Caco-2 (cell line): ENCODE measurements at regions of chr3 and their contacts with region 1.

Region 1: DNA sequence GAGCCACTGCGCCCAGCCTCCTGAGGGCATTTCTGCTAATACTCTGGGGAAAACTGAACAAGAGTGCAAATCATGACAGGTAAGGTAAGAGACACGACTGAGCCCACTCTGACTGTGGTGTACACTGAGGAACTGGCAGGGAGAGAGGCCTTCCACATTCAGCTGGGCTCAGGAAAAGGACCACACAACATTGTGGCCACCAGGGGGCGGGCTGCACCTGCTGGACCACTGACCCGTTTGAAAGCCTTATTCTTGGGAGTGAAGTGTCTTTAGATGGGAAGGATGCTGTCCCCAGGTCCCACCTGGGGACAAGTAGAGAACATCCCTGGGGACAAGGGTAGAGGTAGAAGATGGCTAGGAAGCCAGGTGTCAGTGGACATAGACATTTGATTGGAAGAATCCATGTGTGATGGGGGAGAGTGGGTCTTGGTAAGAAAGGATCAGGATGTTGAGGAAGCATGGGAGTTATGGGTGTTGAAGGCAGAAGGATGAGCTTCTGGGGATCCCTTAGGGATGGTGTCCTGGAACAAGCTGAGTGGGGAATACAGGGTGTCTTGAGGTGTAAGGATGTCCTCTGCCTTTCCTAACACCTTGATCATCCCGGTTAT is 6.2 kb upstream of the CTDSPL start:
- DNase-seq: peak; percentile 76 to 89
- H3K4me3 ChIP-seq: no peak overlapping the region
- H3K4me3 Mint-ChIP-seq: no peak overlapping the region
- H3K27ac Mint-ChIP-seq: no peak overlapping the region
- H3K4me1 ChIP-seq: peaks cover 7% of the 10 kb centered on the region
- H3K4me1 Mint-ChIP-seq: no peaks in the 10 kb centered on the region
- H3K27me3 ChIP-seq: no peaks in the 10 kb centered on the region
- H3K27me3 Mint-ChIP-seq: no peaks in the 10 kb centered on the region
- CTCF ChIP-seq: peak; percentile 87 to 91

Region 2: DNA sequence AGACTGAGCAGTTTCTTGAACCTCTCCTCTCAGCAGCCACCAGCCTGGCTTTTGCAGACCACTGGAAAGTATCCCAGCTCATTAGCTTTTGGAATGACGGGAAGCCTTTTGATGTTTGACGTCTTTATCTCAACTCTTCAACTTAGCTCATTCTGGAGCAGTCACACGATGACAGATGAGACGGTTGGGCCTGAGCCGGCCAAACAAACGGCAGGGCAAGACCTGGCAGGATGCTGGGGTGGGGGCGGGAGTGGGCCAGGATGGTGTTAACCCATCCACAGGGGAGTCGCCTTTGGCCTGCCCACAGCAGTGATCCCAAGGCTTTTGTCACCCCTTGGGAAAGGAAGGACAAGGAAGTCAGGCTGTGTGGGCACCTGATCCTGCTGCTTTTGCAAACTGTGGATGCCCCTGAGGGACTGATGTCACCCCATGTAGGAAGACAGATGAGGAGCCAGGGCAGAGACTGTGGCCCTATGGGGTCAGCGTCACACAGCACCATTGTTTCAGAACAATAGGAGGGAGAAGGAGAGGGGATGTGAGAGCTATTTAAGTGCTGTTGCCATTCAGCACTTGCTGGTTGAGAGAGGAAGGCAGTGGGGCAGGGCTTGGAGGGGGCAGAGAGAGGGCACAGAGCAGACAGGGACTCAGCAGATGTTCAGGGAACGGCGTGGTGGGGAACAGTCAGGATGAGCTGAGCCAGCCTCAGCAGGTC is 115.7 kb before region 1 on chr3:
- CTCF ChIA-PET with region 1: interaction called, 10 read pairs
- POLR2A ChIA-PET with region 1: no interaction called
- intact Hi-C with region 1: no loop called
- DNase-seq: peak; percentile 17 to 63
- H3K4me3 ChIP-seq: no peak overlapping the region
- H3K4me3 Mint-ChIP-seq: no peak overlapping the region
- H3K27ac Mint-ChIP-seq: no peak overlapping the region
- H3K4me1 ChIP-seq: peaks cover 23% of the 10 kb centered on the region
- H3K4me1 Mint-ChIP-seq: peaks cover 9% of the 10 kb centered on the region
- H3K27me3 ChIP-seq: no peaks in the 10 kb centered on the region
- H3K27me3 Mint-ChIP-seq: no peaks in the 10 kb centered on the region
- CTCF ChIP-seq: no peak

Region 3: GRCh38 chr3:38004415-38005076 is 149.1 kb after region 1 on chr3:
- CTCF ChIA-PET with region 1: interaction called, 7 read pairs
- POLR2A ChIA-PET with region 1: no interaction called
- intact Hi-C with region 1: loop called (anchors 1 kb)
- DNase-seq: peak; percentile 83 to 86
- H3K4me3 ChIP-seq: no peak overlapping the region
- H3K4me3 Mint-ChIP-seq: peak overlapping the region; percentile 26
- H3K27ac Mint-ChIP-seq: peak overlapping the region; percentile 23
- H3K4me1 ChIP-seq: peaks cover 21% of the 10 kb centered on the region
- H3K4me1 Mint-ChIP-seq: peaks cover 25% of the 10 kb centered on the region
- H3K27me3 ChIP-seq: no peaks in the 10 kb centered on the region
- H3K27me3 Mint-ChIP-seq: no peaks in the 10 kb centered on the region
- CTCF ChIP-seq: peak; percentile 73 to 78